ENCODE measurements at regions of chr2 and their contacts with region 1.

Region 1: GRCh38 chr2:230961091-230961491 is 34.8 kb upstream of the SPATA3 start:
- DNase-seq: no peak
- H3K4me3 Mint-ChIP-seq: no peak overlapping the region
- H3K27ac Mint-ChIP-seq: no peak overlapping the region
- H3K4me1 Mint-ChIP-seq: peaks cover 18% of the 10 kb centered on the region
- H3K27me3 Mint-ChIP-seq: peaks cover 28% of the 10 kb centered on the region

Region 2: GRCh38 chr2:230947908-230948365 is 13.2 kb before region 1 on chr2:
- CTCF ChIA-PET with region 1: interaction called, 10 read pairs
- POLR2A ChIA-PET with region 1: no interaction called
- DNase-seq: no peak
- H3K4me3 Mint-ChIP-seq: no peak overlapping the region
- H3K27ac Mint-ChIP-seq: no peak overlapping the region
- H3K4me1 Mint-ChIP-seq: peaks cover 29% of the 10 kb centered on the region
- H3K27me3 Mint-ChIP-seq: no peaks in the 10 kb centered on the region

Region 3: GRCh38 chr2:230980468-230980867 is 19.4 kb after region 1 on chr2:
- CTCF ChIA-PET with region 1: no interaction called
- POLR2A ChIA-PET with region 1: no interaction called
- DNase-seq: no peak
- H3K4me3 Mint-ChIP-seq: peak overlapping the region; percentile 23
- H3K27ac Mint-ChIP-seq: peak overlapping the region; percentile 32
- H3K4me1 Mint-ChIP-seq: peaks cover 73% of the 10 kb centered on the region
- H3K27me3 Mint-ChIP-seq: peaks cover 9% of the 10 kb centered on the region

Region 4: GRCh38 chr2:231000211-231000904 is 39.3 kb after region 1 on chr2:
- CTCF ChIA-PET with region 1: no interaction called
- POLR2A ChIA-PET with region 1: no interaction called
- DNase-seq: no peak
- H3K4me3 Mint-ChIP-seq: no peak overlapping the region
- H3K27ac Mint-ChIP-seq: no peak overlapping the region
- H3K4me1 Mint-ChIP-seq: no peaks in the 10 kb centered on the region
- H3K27me3 Mint-ChIP-seq: peaks cover 46% of the 10 kb centered on the region